AG04449 (cell line): ENCODE measurements at regions of chr10 and their contacts with region 1.

Region 1: GRCh38 chr10:73886085-73886529 is 11.8 kb upstream of the CAMK2G start:
- DNase-seq: no peak
- H3K4me3 ChIP-seq: no peak overlapping the region
- CTCF ChIP-seq: peak; percentile 89

Region 2: DNA sequence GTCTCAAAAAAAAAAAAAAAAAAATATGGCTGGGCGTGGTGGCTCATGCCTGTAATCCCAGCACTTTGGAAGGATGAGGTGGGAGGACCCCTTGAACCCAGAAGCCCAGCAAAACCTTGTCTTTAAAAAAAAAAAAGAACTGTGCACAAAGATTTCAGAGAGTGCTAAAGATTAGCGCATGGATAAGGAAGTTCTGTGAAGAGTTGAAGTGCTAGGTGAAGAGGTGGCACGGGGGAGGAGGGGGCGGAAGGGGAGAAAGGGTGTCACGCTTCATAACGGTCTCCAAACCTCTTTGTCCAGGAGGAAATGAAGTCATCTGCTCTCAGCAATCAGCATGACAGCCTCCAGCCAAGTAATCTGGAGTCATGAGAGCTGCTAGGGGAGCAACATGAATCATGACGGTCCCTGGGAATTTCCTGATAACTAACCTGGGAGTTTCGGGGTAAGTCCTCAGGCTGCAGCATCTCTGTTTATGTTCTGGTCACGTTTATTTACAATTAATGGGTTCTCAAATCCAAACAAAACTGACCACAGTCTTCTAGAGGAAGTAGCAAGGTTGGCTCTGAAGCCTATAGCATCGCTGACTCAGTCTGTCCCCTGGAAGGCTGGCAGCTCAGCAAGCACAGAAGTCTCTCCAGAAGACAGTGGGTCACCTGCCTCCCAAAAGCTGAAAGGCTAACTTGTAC is 22.9 kb after region 1 on chr10:
- CTCF ChIA-PET with region 1: interaction called, 15 read pairs
- POLR2A ChIA-PET with region 1: interaction called, 58 read pairs
- DNase-seq: peak; percentile 85
- H3K4me3 ChIP-seq: peak overlapping the region; percentile 7; the same call in 1 of the 2 replicates
- CTCF ChIP-seq: no peak

Region 3: DNA sequence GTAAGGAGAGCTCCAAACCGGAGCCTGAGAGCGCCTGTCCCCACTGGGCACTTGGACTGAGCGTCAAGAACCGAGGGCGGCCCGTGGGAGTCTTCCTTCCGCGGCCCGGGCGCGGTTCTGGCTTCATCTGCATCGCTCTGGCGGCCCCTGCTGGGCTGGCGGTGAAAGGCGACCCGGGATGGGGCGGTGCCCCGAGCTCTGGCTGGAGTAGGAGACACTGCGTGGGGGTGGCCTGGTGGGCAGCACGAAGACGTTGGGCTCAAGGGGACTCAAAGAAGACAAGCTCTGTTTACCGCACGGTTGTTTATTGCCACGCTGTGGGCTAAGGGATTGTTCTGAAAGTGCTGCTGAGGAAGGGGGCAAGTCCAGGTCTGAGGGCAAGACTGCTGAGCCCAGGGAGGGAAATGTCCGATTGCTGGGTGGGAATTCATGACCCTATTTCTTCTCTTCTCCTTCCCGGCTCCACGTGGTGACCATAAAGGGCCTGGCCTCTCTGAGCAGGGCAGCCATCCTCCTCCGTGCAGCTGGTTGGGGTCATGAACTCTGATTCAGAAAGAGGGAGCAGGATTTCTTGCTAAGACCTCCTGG is 54.6 kb after region 1 on chr10:
- CTCF ChIA-PET with region 1: interaction called, 806 read pairs
- POLR2A ChIA-PET with region 1: interaction called, 31 read pairs
- DNase-seq: no peak
- H3K4me3 ChIP-seq: no peak overlapping the region; the same call in 1 of the 2 replicates
- CTCF ChIP-seq: peak; percentile 99

Region 4: DNA sequence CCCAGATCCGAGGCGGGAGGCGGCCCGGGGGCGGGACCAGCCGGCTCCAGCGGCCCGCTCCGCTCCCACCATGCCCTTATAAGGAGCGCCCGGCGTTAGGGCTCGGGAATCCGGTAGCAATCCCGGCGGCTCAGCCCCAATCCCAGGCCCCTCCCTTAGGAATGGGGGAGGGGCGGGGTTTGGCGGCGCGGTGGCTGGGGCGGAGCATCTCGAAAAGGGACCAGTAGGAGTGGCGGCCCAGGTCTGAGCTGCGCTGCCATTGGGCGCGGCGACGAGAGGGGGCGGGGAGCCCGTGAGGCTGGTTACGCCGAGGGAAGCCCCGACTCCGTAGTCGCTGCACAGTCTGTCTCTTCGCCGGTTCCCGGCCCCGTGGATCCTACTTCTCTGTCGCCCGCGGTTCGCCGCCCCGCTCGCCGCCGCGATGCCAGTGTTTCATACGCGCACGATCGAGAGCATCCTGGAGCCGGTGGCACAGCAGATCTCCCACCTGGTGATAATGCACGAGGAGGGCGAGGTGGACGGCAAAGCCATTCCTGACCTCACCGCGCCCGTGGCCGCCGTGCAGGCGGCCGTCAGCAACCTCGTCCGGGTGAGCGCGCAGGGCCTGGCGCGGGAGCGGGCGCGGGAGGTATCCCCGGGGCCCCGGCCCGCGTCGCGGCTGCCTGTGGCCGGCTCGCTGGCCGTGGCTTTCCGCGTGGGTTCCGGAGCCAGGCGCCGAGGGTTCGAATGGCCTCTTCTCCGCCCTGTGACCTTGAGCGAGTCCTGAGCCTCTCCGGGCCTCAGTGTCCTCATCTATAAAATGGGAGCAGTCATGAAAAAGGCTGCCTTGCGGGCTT is 111.9 kb after region 1 on chr10 and contains the start of gene VCL:
- CTCF ChIA-PET with region 1: interaction called, 28 read pairs
- POLR2A ChIA-PET with region 1: interaction called, 39 read pairs
- DNase-seq: peak; percentile 82
- H3K4me3 ChIP-seq: peak within 1 kb of the TSS; percentile 99
- CTCF ChIP-seq: no peak

Region 5: GRCh38 chr10:74088722-74089121 is 202.6 kb after region 1 on chr10:
- CTCF ChIA-PET with region 1: interaction called, 13 read pairs
- POLR2A ChIA-PET with region 1: no interaction called
- DNase-seq: no peak
- H3K4me3 ChIP-seq: no peak overlapping the region
- CTCF ChIP-seq: no peak